ENCODE measurements at regions of chr4 and their contacts with region 1.

Region 1: DNA sequence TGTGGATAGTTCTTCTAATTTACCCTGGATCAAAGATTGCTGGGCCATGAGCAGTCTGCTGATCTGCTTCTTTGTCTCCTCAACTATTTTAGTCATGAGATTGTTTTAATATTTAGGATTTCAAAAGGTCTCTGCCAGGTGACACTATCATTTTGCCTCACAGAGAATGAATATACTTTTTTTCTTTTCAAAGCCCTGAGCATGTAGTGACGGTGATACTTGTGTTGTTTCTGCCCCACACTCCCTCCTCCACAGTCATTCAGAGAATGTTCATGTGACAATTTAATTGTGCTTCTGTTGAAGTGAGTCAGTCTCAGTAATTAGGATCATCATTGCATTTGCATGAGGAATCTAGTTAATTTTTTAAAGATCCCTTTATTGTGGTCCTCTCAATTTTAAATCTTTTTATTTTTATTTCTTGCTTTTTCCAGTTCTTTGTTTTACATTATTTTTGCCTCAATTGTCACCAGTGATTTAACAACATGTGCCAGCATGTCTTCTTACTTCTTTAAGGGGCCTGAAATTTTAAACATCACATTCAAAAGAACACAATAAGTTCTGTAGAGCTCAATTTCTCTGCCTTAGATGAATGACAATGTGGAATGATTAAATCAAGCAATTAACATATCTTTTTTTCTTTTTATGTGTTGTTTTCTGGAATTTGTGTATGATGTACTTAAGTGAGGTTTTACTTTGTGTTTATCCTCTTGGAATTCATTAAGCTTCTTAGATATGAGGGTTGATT is 12.3 kb downstream of the MMRN1 start:
- DNase-seq: no peak
- ATAC-seq: peak; percentile 42
- H3K4me3 Mint-ChIP-seq: no peak overlapping the region
- H3K27ac Mint-ChIP-seq: no peak overlapping the region
- H3K4me1 Mint-ChIP-seq: no peaks in the 10 kb centered on the region
- H3K27me3 Mint-ChIP-seq: no peaks in the 10 kb centered on the region
- CTCF ChIP-seq: no peak

Region 2: GRCh38 chr4:89158884-89159503 is 748.0 kb before region 1 on chr4:
- CTCF ChIA-PET with region 1: interaction called, 3 read pairs
- POLR2A ChIA-PET with region 1: no interaction called
- intact Hi-C with region 1: loop called (anchors 10 kb)
- DNase-seq: no peak
- ATAC-seq: peak; percentile 49
- H3K4me3 Mint-ChIP-seq: no peak overlapping the region
- H3K27ac Mint-ChIP-seq: no peak overlapping the region
- H3K4me1 Mint-ChIP-seq: no peaks in the 10 kb centered on the region
- H3K27me3 Mint-ChIP-seq: peaks cover 4% of the 10 kb centered on the region
- CTCF ChIP-seq: peak; percentile 87

Region 3: GRCh38 chr4:89598602-89599001 is 308.3 kb before region 1 on chr4:
- CTCF ChIA-PET with region 1: no interaction called
- POLR2A ChIA-PET with region 1: no interaction called
- intact Hi-C with region 1: loop called (anchors 10 kb)
- DNase-seq: no peak
- ATAC-seq: no peak
- H3K4me3 Mint-ChIP-seq: no peak overlapping the region
- H3K27ac Mint-ChIP-seq: no peak overlapping the region
- H3K4me1 Mint-ChIP-seq: no peaks in the 10 kb centered on the region
- H3K27me3 Mint-ChIP-seq: peaks cover 9% of the 10 kb centered on the region
- CTCF ChIP-seq: peak; percentile 20

Region 4: GRCh38 chr4:89657931-89658700 is 248.8 kb before region 1 on chr4:
- CTCF ChIA-PET with region 1: interaction called, 4 read pairs
- POLR2A ChIA-PET with region 1: no interaction called
- intact Hi-C with region 1: loop called (anchors 5 kb)
- DNase-seq: no peak
- ATAC-seq: no peak
- H3K4me3 Mint-ChIP-seq: no peak overlapping the region
- H3K27ac Mint-ChIP-seq: no peak overlapping the region
- H3K4me1 Mint-ChIP-seq: no peaks in the 10 kb centered on the region
- H3K27me3 Mint-ChIP-seq: no peaks in the 10 kb centered on the region
- CTCF ChIP-seq: peak; percentile 21

Measured in activated CD8-positive, alpha-beta T cell treated with anti-CD3 and anti-CD28 coated beads for 36 hours (primary cell).